HepG2 (cell line): ENCODE measurements at regions of chr12 and their contacts with region 1.

Region 1: GRCh38 chr12:107402041-107403022 is 283.3 kb upstream of the PWP1 start:
- DNase-seq: peak; percentile 69
- ATAC-seq: peak; percentile 83
- H3K4me3 ChIP-seq: no peak overlapping the region
- H3K27ac ChIP-seq: no peak overlapping the region
- H3K4me1 ChIP-seq: peaks cover 13% of the 10 kb centered on the region
- H3K27me3 ChIP-seq: no peaks in the 10 kb centered on the region; a peak in 1 of 5 replicates
- CTCF ChIP-seq: peak; percentile 82
- EP300 ChIP-seq: no peak
- POLR2A ChIP-seq: no peak
- RAD21 ChIP-seq: peak; percentile 88

Region 2: DNA sequence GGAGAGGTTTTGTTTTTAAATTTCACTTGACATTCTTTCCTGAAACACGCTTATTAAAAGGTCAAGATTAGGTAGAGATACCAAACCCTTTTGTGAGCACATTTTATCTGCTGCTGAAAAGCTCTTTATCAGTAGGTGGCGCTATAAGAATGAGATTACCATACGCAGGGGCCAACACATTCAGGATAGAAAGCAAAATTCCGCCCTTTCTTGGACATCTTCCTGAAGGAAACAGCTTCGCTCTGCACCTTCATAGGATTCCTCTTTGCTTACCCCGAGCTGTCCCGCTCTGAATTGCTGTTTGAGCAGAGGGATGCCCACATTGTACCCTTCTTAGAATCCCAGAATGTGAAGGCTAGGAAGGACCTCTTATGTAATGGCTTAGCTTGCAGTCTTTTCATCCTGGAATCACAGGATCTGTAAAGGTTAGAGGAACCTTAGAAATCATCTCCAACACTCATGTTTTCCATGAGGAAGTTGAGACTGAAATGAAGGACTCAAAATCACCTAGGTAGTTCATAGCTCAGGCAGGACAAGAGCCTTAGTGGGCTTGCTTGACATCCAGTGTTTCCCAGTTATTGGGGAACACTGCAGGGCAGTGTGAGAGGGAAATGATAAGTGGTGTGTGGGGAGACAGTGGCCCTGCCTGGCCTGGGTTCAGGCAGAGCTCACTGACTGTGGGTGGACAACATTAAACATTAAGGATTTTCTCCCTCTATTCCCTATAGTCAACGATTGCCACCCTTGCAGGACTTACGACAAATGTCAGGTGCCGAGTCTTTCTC is 270.3 kb before region 1 on chr12:
- CTCF ChIA-PET with region 1: interaction called, 30 read pairs
- POLR2A ChIA-PET with region 1: no interaction called
- in situ Hi-C with region 1: loop called (anchors 5 kb)
- intact Hi-C with region 1: loop called (anchors 1 kb)
- DNase-seq: peak; percentile 49
- ATAC-seq: peak; percentile 73
- H3K4me3 ChIP-seq: no peak overlapping the region
- H3K27ac ChIP-seq: no peak overlapping the region
- H3K4me1 ChIP-seq: peaks cover 23% of the 10 kb centered on the region
- H3K27me3 ChIP-seq: no peaks in the 10 kb centered on the region
- CTCF ChIP-seq: peak; percentile 86
- EP300 ChIP-seq: no peak
- POLR2A ChIP-seq: no peak
- RAD21 ChIP-seq: peak; percentile 75